ENCODE measurements at regions of chr20 and their contacts with region 1.

Region 1: DNA sequence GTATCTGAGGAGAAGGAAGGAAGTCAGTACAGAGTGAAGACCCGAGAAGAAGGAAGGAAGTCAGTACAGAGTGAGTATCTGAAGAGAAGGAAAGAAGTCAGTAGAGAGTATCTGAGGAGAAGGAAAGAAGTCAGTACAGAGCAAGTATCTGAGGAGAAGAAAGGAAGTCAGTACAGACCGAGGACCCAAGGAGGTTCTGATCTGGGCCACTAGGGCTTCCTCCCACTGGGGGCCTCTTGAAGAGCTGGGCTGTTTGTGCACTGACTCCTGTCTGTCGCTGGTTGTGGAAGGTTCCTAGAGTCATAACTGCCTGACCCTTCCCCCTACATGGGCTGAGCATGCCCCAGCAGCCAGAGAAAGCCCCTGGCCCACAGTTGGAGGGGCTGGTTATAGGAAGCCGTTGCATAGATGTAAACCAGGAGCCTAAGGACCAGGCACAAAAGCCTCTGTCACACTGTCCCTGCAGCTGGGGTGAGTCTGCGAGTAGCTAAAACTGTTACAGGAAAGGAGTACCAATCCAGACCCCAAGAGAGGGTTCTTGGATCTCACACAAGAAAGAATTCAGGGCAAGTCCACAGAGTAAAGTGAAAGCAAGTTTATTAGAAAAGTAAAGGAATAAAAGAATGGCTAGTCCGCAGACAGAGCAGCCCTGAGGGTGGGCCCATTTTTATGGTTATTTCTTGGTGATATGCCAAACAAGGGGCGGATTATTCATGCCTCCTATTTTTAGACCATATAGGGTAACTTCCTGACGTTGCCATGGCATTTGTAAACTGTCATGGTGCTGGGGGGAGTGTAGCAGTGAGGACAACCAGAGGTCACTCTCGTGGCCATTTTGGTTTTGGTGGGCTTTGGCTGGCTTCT is 395.9 kb downstream of the PREX1 start:
- DNase-seq: no peak
- H3K4me3 ChIP-seq: no peak overlapping the region
- H3K27ac ChIP-seq: no peak overlapping the region
- H3K4me1 ChIP-seq: no peaks in the 10 kb centered on the region
- H3K27me3 ChIP-seq: no peaks in the 10 kb centered on the region
- CTCF ChIP-seq: no peak

Region 2: GRCh38 chr20:47527004-47527757 is 904.7 kb before region 1 on chr20:
- CTCF ChIA-PET with region 1: no interaction called
- POLR2A ChIA-PET with region 1: interaction called, 14 read pairs
- intact Hi-C with region 1: no loop called
- DNase-seq: no peak
- H3K4me3 ChIP-seq: no peak overlapping the region
- H3K27ac ChIP-seq: peak overlapping the region; percentile 44
- H3K4me1 ChIP-seq: no peaks in the 10 kb centered on the region
- H3K27me3 ChIP-seq: no peaks in the 10 kb centered on the region
- CTCF ChIP-seq: no peak

Region 3: GRCh38 chr20:47663333-47664067 is 768.4 kb before region 1 on chr20:
- CTCF ChIA-PET with region 1: no interaction called
- POLR2A ChIA-PET with region 1: interaction called, 11 read pairs
- intact Hi-C with region 1: no loop called
- DNase-seq: peak; percentile 73 to 87
- H3K4me3 ChIP-seq: no peak overlapping the region
- H3K27ac ChIP-seq: 0 out of 2 replicates have a peak overlapping the region, but pooled peaks have one; percentile 6
- H3K4me1 ChIP-seq: no peaks in the 10 kb centered on the region
- H3K27me3 ChIP-seq: no peaks in the 10 kb centered on the region
- CTCF ChIP-seq: peak; percentile 98

Measured in PC-9 (cell line).